ENCODE measurements at regions of chr21 and their contacts with region 1.

Region 1: GRCh38 chr21:31363720-31364119 is 19.7 kb upstream of the TIAM1 start:
- DNase-seq: peak; percentile 85
- H3K4me3 Mint-ChIP-seq: peak overlapping the region; percentile 73
- H3K27ac Mint-ChIP-seq: peak overlapping the region; percentile 80
- H3K4me1 Mint-ChIP-seq: peaks cover 55% of the 10 kb centered on the region
- H3K27me3 Mint-ChIP-seq: no peaks in the 10 kb centered on the region

Region 2: DNA sequence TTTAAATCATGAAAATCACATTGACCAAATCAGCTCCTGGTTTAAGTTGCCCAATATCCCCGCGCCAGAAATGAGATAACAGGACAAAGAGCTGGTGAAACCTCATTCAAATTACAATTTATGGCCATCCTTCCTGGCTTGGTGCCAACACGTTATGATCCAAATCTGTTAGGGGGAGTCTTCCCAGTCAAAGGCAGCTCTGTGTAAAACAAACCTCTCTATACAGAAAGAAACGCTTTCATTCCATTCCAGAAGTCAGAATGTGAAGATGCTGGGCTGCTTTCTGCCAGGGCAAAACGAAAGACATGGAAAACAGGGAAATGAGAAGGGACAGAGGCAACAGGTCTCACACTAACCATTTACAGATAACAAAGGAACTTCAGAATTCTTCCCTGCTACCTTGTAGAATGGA is 33.8 kb after region 1 on chr21:
- intact Hi-C with region 1: loop called (anchors 5 kb)
- DNase-seq: no peak
- H3K4me3 Mint-ChIP-seq: no peak overlapping the region
- H3K27ac Mint-ChIP-seq: no peak overlapping the region
- H3K4me1 Mint-ChIP-seq: peaks cover 37% of the 10 kb centered on the region
- H3K27me3 Mint-ChIP-seq: no peaks in the 10 kb centered on the region